H1 (cell line): ENCODE measurements at regions of chr11 and their contacts with region 1.

Region 1: DNA sequence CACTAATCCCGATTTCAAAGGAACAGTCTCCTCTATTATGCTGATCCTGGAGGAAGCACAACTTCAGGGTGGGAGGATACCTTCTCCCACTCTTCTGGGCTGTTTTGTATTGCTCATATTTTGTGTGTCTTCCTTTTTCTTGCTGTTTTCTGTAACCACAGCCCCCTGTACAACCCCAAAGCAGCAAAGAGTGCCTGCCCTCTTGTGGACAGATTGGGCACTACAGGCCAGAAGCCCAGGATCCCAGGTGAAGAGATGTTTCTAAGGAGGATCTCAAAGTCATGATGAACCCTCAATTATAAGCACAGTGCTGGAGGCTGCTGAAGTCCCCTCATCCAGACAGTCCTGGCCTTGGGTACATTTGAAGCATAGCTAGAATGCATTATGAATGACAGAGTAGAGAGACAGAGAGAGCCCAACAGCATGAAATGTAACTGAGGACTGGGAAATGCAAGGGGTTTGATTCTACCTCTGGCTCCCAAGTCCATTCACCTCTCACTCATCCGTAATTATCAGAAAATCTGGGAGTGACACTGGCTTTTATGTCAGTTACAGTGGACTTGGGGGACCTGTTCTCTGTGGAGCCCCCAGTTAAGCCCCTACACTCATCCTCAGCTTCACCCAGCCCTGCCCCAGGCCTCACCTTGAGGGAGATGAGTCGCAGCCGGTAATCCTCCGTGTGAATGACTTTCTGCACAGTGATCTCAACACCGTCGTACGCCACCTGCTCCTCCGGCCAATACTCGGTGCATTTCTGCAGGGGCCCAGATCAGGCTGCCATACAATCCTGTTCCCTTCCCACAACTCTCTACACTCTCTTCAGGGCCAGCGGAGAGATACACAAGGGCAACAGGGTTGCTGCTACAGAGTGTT is 6.2 kb upstream of the IGSF22 start:
- DNase-seq: peak in 1 of 2 experiments; percentile 90
- H3K4me3 ChIP-seq: no peak overlapping the region
- H3K27ac ChIP-seq: no peak overlapping the region
- H3K4me1 ChIP-seq: peaks cover 0 to 9% (median 3%) of the 10 kb centered on the region in 4 experiments; a peak in 5 of 7 replicates
- H3K27me3 ChIP-seq: no peaks in the 10 kb centered on the region
- CTCF ChIP-seq: peak; percentile 82 to 91 (median 86)
- EP300 ChIP-seq: no peak
- POLR2A ChIP-seq: no peak
- RAD21 ChIP-seq: peak; percentile 71 to 81

Region 2: DNA sequence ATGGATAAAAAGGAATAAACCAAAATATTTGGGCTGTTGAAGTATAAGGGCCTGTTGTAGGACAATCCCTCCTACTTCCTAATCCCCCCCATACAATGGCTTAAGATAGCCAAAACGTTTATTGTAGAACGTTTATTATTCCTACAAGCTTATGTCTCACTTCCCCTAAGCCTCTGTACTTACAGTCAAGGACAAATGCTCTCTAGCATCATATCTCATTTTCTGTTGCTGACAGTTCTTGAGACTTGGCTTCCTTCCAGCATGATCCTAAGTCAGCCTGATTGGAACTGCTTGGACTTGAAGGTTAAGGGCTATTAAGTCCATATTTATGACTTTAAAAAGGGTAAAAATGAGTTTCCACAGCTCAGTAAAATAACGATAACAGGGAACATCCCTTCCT is 123.8 kb before region 1 on chr11:
- CTCF ChIA-PET with region 1: no interaction called
- POLR2A ChIA-PET with region 1: no interaction called
- DNase-seq: no peak
- H3K4me3 ChIP-seq: no peak overlapping the region
- H3K27ac ChIP-seq: no peak overlapping the region
- H3K4me1 ChIP-seq: no peaks in the 10 kb centered on the region
- H3K27me3 ChIP-seq: no peaks in the 10 kb centered on the region
- CTCF ChIP-seq: no peak
- EP300 ChIP-seq: no peak
- POLR2A ChIP-seq: no peak
- RAD21 ChIP-seq: no peak

Region 3: DNA sequence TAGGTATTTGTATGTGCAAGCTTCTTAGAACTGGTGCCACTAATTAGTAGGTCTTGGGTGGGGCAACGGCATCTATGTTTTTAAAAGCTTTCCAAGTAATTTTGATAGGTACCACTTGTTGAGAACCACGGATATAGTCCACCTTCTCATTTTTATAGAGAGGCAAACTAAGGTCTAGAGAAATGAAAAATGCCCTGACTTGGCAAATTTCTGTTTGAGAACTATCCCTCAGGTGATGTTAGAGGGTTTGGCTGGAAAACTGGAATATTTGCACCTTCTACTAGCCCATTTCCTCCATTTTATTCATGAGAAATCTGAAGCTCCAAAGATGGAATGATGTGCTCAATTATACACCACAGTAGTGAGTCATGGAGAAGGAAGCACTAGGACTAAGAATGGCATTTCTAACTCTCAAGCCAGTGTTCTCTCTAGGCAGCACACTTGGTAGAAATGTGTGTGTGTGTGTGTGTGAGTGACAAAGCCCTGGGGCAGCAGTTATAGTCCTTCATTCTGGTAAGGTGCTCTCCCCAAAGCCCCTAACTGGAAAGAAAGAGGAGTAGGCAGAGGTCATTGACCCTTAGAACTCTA is 35.5 kb before region 1 on chr11:
- CTCF ChIA-PET with region 1: interaction called, 18 read pairs
- POLR2A ChIA-PET with region 1: interaction called, 4 read pairs
- DNase-seq: no peak
- H3K4me3 ChIP-seq: no peak overlapping the region
- H3K27ac ChIP-seq: no peak overlapping the region
- H3K4me1 ChIP-seq: peaks cover 0 to 9% (median 2%) of the 10 kb centered on the region in 4 experiments; a peak in 3 of 7 replicates
- H3K27me3 ChIP-seq: peaks cover 0 to 7% (median 5%) of the 10 kb centered on the region in 4 experiments; a peak in 5 of 7 replicates
- CTCF ChIP-seq: no peak
- EP300 ChIP-seq: no peak
- POLR2A ChIP-seq: no peak
- RAD21 ChIP-seq: no peak

Region 4: GRCh38 chr11:18721561-18722292 is 10.5 kb before region 1 on chr11:
- CTCF ChIA-PET with region 1: interaction called, 225 read pairs
- POLR2A ChIA-PET with region 1: interaction called, 3 read pairs
- DNase-seq: peak in 1 of 2 experiments; percentile 85
- H3K4me3 ChIP-seq: peak overlapping the region; percentile 48 to 86 (median 80)
- H3K27ac ChIP-seq: no peak overlapping the region
- H3K4me1 ChIP-seq: peaks cover 0 to 15% (median 10%) of the 10 kb centered on the region in 4 experiments; a peak in 5 of 7 replicates
- H3K27me3 ChIP-seq: peaks cover 0 to 9% (median 3%) of the 10 kb centered on the region in 4 experiments; a peak in 2 of 7 replicates
- CTCF ChIP-seq: peak; percentile 68 to 89 (median 84)
- EP300 ChIP-seq: no peak
- POLR2A ChIP-seq: no peak
- RAD21 ChIP-seq: peak; percentile 51 to 55

Region 5: GRCh38 chr11:18749697-18750319 is 17.6 kb after region 1 on chr11:
- CTCF ChIA-PET with region 1: interaction called, 225 read pairs
- POLR2A ChIA-PET with region 1: interaction called, 3 read pairs
- DNase-seq: no peak
- H3K4me3 ChIP-seq: no peak overlapping the region
- H3K27ac ChIP-seq: no peak overlapping the region
- H3K4me1 ChIP-seq: peaks cover 0 to 8% (median 4%) of the 10 kb centered on the region in 4 experiments; a peak in 4 of 7 replicates
- H3K27me3 ChIP-seq: no peaks in the 10 kb centered on the region
- CTCF ChIP-seq: no peak
- EP300 ChIP-seq: no peak
- POLR2A ChIP-seq: no peak
- RAD21 ChIP-seq: no peak

Region 6: GRCh38 chr11:18768472-18768901 is 36.3 kb after region 1 on chr11:
- CTCF ChIA-PET with region 1: interaction called, 244 read pairs
- POLR2A ChIA-PET with region 1: no interaction called
- DNase-seq: no peak
- H3K4me3 ChIP-seq: no peak overlapping the region
- H3K27ac ChIP-seq: no peak overlapping the region
- H3K4me1 ChIP-seq: peaks cover 0 to 15% (median 7%) of the 10 kb centered on the region in 4 experiments; a peak in 6 of 7 replicates
- H3K27me3 ChIP-seq: 0 out of 7 replicates have a peak, but pooled peaks cover 0 to 3% (median 0%) of the 10 kb centered on the region in 4 experiments
- CTCF ChIP-seq: no peak
- EP300 ChIP-seq: no peak
- POLR2A ChIP-seq: no peak
- RAD21 ChIP-seq: no peak

Region 7: DNA sequence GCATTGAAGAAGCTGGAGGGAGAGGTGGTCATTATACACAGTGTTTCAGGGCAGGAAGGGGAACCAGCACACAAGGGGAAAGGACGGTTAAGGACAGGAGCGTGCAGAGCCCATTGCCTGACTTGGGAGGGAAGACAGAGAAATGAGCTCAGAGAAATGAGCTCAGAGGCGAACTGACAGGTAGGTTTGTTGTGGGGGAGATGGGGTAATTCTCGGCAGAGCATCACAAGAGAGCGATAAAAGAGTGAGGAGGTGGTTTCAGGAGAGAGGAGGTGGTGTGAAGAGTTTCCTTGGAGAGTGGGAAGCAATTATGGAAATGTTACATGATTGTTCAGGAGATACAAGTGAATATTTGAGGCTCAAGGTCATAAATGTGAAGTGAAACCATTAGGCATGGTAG is 146.0 kb after region 1 on chr11:
- CTCF ChIA-PET with region 1: no interaction called
- POLR2A ChIA-PET with region 1: no interaction called
- DNase-seq: no peak
- H3K4me3 ChIP-seq: no peak overlapping the region
- H3K27ac ChIP-seq: no peak overlapping the region
- H3K4me1 ChIP-seq: no peaks in the 10 kb centered on the region
- H3K27me3 ChIP-seq: no peaks in the 10 kb centered on the region
- CTCF ChIP-seq: no peak
- EP300 ChIP-seq: no peak
- POLR2A ChIP-seq: no peak
- RAD21 ChIP-seq: no peak